H1 (cell line): ENCODE measurements at regions of chr2 and their contacts with region 1.

Region 1: GRCh38 chr2:73176881-73177644 is 25.3 kb upstream of the NOTO start:
- DNase-seq: peak; percentile 43 to 97
- H3K4me3 ChIP-seq: peak overlapping the region; percentile 24 to 64 (median 54); a peak in 7 of 8 replicates
- H3K27ac ChIP-seq: no peak overlapping the region
- H3K4me1 ChIP-seq: peaks cover 2 to 23% (median 11%) of the 10 kb centered on the region in 4 experiments; a peak in 6 of 7 replicates
- H3K27me3 ChIP-seq: peaks cover 22 to 59% (median 45%) of the 10 kb centered on the region in 4 experiments
- CTCF ChIP-seq: peak; percentile 87 to 99 (median 96)
- EP300 ChIP-seq: peak in 1 of 2 experiments; percentile 20; a peak in 1 of 3 replicates
- POLR2A ChIP-seq: no peak
- RAD21 ChIP-seq: peak; percentile 87 to 90

Region 2: DNA sequence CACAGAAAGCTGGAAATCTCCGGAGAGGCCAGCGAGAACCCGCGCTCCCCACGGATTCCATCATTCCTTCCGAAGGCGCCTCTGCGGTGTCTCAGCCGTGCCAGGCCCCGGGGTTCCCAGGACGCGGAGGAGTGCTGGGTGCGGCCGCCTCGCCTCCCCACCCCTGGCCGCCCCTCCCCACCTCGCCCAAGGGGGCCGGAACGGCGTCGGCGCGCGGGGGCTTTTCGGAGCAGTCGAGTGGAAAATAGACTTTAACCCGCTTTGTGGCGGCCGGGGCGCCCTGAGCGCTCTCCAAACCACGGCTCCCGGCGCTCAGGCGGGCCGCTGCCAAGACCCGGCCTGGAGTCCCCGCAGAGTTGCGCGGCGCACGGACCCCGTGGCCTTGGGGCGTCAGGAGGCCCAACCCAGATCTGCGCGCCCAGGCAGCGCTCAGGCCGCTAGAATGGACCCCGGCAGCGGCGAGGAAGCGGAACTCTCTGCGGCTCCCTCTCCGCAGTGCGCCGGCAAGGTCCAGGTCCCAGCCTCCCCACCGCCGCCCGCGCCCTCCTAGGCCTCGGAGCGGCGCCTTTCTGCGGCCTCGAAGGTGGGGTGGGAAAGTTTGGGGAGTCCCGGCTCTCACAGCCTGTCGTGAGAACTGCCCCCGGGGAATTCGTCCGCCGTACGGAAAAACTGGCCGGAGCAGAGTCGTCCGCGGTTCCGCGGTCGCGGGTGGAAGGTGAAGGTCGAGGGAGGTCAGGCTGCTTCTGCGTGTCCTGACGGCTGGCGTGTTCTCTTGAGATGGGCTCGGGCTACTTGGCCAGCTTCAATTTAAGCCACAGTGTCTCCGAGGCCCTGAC is 260.9 kb before region 1 on chr2:
- CTCF ChIA-PET with region 1: interaction called, 10 read pairs
- POLR2A ChIA-PET with region 1: no interaction called
- DNase-seq: peak in 1 of 2 experiments; percentile 86
- H3K4me3 ChIP-seq: peak overlapping the region; percentile 55 to 70 (median 66)
- H3K27ac ChIP-seq: no peak overlapping the region
- H3K4me1 ChIP-seq: peaks cover 20 to 52% (median 28%) of the 10 kb centered on the region in 4 experiments
- H3K27me3 ChIP-seq: peaks cover 80 to 96% (median 89%) of the 10 kb centered on the region in 4 experiments
- CTCF ChIP-seq: no peak
- EP300 ChIP-seq: no peak
- POLR2A ChIP-seq: no peak
- RAD21 ChIP-seq: no peak

Region 3: GRCh38 chr2:72999729-73000725 is 177.0 kb before region 1 on chr2:
- CTCF ChIA-PET with region 1: interaction called, 11 read pairs
- POLR2A ChIA-PET with region 1: no interaction called
- DNase-seq: peak in 1 of 2 experiments; percentile 38
- H3K4me3 ChIP-seq: no peak overlapping the region
- H3K27ac ChIP-seq: no peak overlapping the region
- H3K4me1 ChIP-seq: no peaks in the 10 kb centered on the region; a peak in 1 of 7 replicates
- H3K27me3 ChIP-seq: no peaks in the 10 kb centered on the region
- CTCF ChIP-seq: no peak
- EP300 ChIP-seq: no peak
- POLR2A ChIP-seq: no peak
- RAD21 ChIP-seq: no peak

Region 4: DNA sequence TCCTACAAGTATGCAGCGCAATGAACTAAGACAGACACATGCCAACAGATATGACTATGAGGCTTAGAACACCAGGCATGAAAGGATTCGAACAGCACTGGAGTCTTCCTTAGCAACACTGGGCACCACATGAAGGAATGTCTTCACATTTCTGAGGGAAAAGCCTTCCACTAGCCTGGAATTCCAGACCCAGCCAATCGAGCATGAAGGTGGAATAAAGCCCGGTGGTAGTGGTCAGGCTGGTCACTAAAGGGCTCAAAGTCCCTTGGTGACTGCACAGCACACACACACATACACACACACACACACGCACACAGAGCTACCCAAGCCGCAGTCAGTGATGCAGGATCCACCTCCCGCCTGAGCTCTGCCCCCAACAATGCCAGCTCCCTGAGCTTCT is 85.9 kb before region 1 on chr2:
- CTCF ChIA-PET with region 1: interaction called, 31 read pairs
- POLR2A ChIA-PET with region 1: interaction called, 4 read pairs
- DNase-seq: no peak
- H3K4me3 ChIP-seq: no peak overlapping the region
- H3K27ac ChIP-seq: no peak overlapping the region
- H3K4me1 ChIP-seq: no peaks in the 10 kb centered on the region; a peak in 1 of 7 replicates
- H3K27me3 ChIP-seq: no peaks in the 10 kb centered on the region
- CTCF ChIP-seq: no peak
- EP300 ChIP-seq: no peak
- POLR2A ChIP-seq: no peak
- RAD21 ChIP-seq: no peak

Region 5: DNA sequence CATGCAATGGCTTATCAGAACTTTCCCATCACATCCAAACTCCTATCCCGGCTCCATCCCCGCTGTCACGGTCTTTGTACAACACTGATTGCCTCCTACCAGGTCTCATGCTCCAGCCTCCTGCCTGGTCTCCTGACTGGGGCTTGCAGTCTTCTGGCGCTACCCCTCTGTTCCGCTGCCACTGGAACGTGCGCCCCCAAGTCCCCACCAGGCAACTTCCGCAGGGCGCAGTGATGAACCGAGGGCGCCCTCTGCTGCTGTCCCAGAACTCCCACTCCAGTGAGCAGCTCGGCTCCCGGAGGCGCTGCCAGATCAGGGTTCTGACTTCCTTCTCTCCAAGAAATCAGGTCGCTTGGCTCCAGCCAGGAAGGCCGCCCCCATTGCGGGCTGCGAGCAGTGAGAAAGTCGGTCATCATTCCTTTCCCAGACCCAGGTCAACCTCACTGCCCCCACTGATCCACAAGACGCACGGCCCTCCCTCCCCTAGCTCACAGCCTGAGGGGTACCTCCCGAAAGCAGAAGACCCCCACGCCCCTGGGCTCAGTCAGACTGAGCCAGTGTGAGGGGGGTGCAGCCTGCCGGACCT is 20.4 kb before region 1 on chr2:
- CTCF ChIA-PET with region 1: interaction called, 19 read pairs
- POLR2A ChIA-PET with region 1: interaction called, 3 read pairs
- DNase-seq: peak; percentile 77 to 89
- H3K4me3 ChIP-seq: peak overlapping the region; percentile 20 to 54 (median 38); a peak in 6 of 8 replicates
- H3K27ac ChIP-seq: no peak overlapping the region
- H3K4me1 ChIP-seq: peaks cover 0 to 3% (median 0%) of the 10 kb centered on the region in 4 experiments; a peak in 2 of 7 replicates
- H3K27me3 ChIP-seq: peaks cover 0 to 7% (median 2%) of the 10 kb centered on the region in 4 experiments; a peak in 4 of 7 replicates
- CTCF ChIP-seq: peak; percentile 95 to 99 (median 95)
- EP300 ChIP-seq: peak in 1 of 2 experiments; percentile 31; a peak in 1 of 3 replicates
- POLR2A ChIP-seq: no peak
- RAD21 ChIP-seq: peak; percentile 95 to 98

Region 6: DNA sequence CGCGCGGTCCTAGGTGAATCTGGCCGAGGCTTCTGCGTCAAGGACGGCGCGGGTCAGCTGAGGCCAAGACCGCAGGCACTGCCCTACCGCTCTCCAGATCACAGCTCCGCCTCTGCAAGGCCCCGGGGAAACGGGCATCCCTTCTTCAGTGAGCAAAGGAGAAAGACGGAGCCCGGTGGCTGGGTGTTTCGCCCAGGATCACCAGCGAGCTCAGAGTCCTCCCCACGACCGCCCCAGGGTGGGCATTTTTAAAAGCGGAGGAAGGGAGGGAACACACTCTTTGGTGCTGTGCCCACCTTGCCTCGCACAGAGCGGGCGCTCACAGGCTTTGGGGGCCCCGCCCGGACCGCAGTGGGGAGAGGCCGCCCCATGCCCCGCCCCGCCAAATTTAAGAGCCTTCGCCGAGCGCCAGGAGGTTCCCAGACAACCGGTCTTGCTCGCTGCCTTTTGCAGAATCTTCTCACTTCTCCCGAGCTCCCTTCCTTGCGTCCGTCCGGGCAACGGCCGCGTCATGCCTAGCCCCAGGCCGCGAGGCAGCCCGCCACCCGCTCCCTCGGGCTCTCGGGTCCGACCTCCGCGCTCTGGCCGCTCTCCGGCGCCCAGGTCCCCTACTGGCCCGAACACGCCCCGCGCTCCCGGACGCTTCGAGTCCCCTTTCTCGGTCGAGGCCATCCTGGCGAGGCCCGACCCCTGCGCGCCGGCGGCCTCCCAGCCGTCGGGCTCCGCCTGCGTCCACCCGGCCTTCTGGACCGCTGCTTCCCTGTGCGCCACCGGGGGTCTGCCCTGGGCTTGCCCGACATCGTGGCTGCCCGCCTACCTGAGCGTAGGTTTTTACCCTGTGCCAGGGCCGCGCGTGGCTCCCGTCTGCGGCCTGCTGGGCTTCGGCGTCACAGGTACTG is 25.3 kb after region 1 on chr2 and contains the start of gene NOTO:
- CTCF ChIA-PET with region 1: interaction called, 92 read pairs
- POLR2A ChIA-PET with region 1: interaction called, 4 read pairs
- DNase-seq: peak in 1 of 2 experiments; percentile 81
- H3K4me3 ChIP-seq: peak within 1 kb of the TSS; percentile 26 to 57 (median 42)
- H3K27ac ChIP-seq: no peak within 1 kb of the TSS
- H3K4me1 ChIP-seq: peaks cover 0 to 2% (median 0%) of the 10 kb centered on the region in 4 experiments; a peak in 2 of 7 replicates
- H3K27me3 ChIP-seq: peaks cover 14 to 34% (median 25%) of the 10 kb centered on the region in 4 experiments
- CTCF ChIP-seq: no peak
- EP300 ChIP-seq: no peak
- POLR2A ChIP-seq: no peak
- RAD21 ChIP-seq: no peak
- total RNA-seq, gene NOTO: 0.44 and 0.54 TPM in 2 replicates

Region 7: GRCh38 chr2:73239776-73240175 is 62.7 kb after region 1 on chr2:
- CTCF ChIA-PET with region 1: no interaction called
- POLR2A ChIA-PET with region 1: no interaction called
- DNase-seq: no peak
- H3K4me3 ChIP-seq: no peak overlapping the region
- H3K27ac ChIP-seq: no peak overlapping the region
- H3K4me1 ChIP-seq: peaks cover 5 to 18% (median 12%) of the 10 kb centered on the region in 4 experiments; a peak in 5 of 7 replicates
- H3K27me3 ChIP-seq: no peaks in the 10 kb centered on the region
- CTCF ChIP-seq: no peak
- EP300 ChIP-seq: no peak
- POLR2A ChIP-seq: no peak
- RAD21 ChIP-seq: no peak

Region 8: GRCh38 chr2:73297151-73297559 is 120.1 kb after region 1 on chr2:
- CTCF ChIA-PET with region 1: no interaction called
- POLR2A ChIA-PET with region 1: no interaction called
- DNase-seq: no peak
- H3K4me3 ChIP-seq: no peak overlapping the region
- H3K27ac ChIP-seq: no peak overlapping the region
- H3K4me1 ChIP-seq: peaks cover 0 to 8% (median 2%) of the 10 kb centered on the region in 4 experiments; a peak in 4 of 7 replicates
- H3K27me3 ChIP-seq: peaks cover 15 to 44% (median 33%) of the 10 kb centered on the region in 4 experiments
- CTCF ChIP-seq: no peak
- EP300 ChIP-seq: no peak
- POLR2A ChIP-seq: no peak
- RAD21 ChIP-seq: no peak